Activated CD4-positive, alpha-beta T cell treated with anti-CD3 and anti-CD28 coated beads for 36 hours (primary cell): ENCODE measurements at regions of chr4 and their contacts with region 1.

Region 1: GRCh38 chr4:40924096-40924792 is 174.5 kb downstream of the NSUN7 start:
- DNase-seq: peak; percentile 91
- ATAC-seq: peak; percentile 87
- H3K4me3 Mint-ChIP-seq: no peak overlapping the region
- H3K27ac Mint-ChIP-seq: peak overlapping the region; percentile 90
- H3K4me1 Mint-ChIP-seq: peaks cover 10% of the 10 kb centered on the region
- H3K27me3 Mint-ChIP-seq: peaks cover 21% of the 10 kb centered on the region

Region 2: GRCh38 chr4:39950861-39951481 is 973.3 kb before region 1 on chr4:
- CTCF ChIA-PET with region 1: no interaction called
- POLR2A ChIA-PET with region 1: no interaction called
- intact Hi-C with region 1: no loop called
- DNase-seq: no peak
- ATAC-seq: no peak
- H3K4me3 Mint-ChIP-seq: no peak overlapping the region
- H3K27ac Mint-ChIP-seq: no peak overlapping the region
- H3K4me1 Mint-ChIP-seq: peaks cover 57% of the 10 kb centered on the region
- H3K27me3 Mint-ChIP-seq: no peaks in the 10 kb centered on the region

Region 3: GRCh38 chr4:40228497-40229365 is 695.5 kb before region 1 on chr4:
- CTCF ChIA-PET with region 1: no interaction called
- POLR2A ChIA-PET with region 1: no interaction called
- intact Hi-C with region 1: no loop called
- DNase-seq: peak; percentile 64
- ATAC-seq: peak; percentile 34
- H3K4me3 Mint-ChIP-seq: peak overlapping the region; percentile 61
- H3K27ac Mint-ChIP-seq: peak overlapping the region; percentile 96
- H3K4me1 Mint-ChIP-seq: peaks cover 93% of the 10 kb centered on the region
- H3K27me3 Mint-ChIP-seq: no peaks in the 10 kb centered on the region

Region 4: DNA sequence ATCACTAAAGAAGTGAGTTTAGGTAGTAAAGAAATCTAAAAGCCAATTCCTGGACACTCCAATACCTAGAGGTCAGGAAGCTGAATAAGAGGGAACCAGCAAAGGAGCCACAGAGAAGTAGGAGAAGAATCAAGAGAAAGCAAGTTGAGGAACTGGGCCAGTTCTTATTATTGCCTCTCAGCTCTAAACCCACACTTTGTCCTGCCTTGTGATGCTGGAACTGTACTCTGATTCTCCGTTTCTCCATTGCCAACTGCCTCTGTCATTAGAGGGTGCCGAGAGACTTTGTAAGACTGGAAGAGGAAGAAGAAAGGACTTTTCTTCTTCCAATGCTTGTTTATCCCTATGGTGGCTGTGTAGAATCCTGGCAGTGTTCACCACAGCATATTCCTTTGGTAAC is 135.9 kb before region 1 on chr4:
- CTCF ChIA-PET with region 1: no interaction called
- POLR2A ChIA-PET with region 1: no interaction called
- intact Hi-C with region 1: no loop called
- DNase-seq: no peak
- ATAC-seq: no peak
- H3K4me3 Mint-ChIP-seq: no peak overlapping the region
- H3K27ac Mint-ChIP-seq: no peak overlapping the region
- H3K4me1 Mint-ChIP-seq: no peaks in the 10 kb centered on the region
- H3K27me3 Mint-ChIP-seq: peaks cover 2% of the 10 kb centered on the region

Region 5: GRCh38 chr4:40840985-40841571 is 83.2 kb before region 1 on chr4:
- CTCF ChIA-PET with region 1: interaction called, 23 read pairs
- POLR2A ChIA-PET with region 1: no interaction called
- intact Hi-C with region 1: loop called (anchors 2 kb)
- DNase-seq: peak; percentile 93
- ATAC-seq: peak; percentile 97
- H3K4me3 Mint-ChIP-seq: no peak overlapping the region
- H3K27ac Mint-ChIP-seq: no peak overlapping the region
- H3K4me1 Mint-ChIP-seq: peaks cover 5% of the 10 kb centered on the region
- H3K27me3 Mint-ChIP-seq: peaks cover 6% of the 10 kb centered on the region

Region 6: DNA sequence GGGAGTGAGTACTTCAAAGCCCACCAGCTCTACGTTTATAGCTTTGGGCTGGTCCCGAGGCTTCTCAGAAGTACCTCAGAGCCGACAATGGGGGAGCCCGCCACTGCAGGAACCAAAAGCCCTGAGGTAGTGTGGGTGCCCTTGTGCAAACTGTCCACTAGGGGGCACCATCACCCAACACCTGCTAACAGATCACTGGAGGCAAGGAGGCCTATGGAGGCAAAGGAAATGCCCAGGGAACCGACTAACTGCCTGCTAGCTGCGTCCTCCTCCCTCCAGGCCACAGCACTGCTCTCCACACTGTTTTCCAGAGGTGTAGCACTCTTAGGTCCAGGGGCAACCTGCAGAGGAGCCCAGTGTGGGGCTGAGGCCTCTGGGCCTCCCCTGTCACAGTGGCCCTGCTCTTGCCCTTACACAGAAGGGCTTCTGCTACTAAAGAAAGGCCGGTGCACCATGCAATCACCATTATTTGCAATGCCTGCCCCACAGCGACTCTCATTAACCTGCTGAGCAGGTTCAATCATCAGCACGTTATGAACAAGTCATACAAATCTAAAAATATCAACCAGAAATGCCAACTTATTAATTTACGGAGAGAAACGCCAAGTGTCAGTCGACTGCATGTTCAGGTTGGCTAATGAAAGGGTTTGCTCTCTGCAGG is 15.4 kb before region 1 on chr4:
- CTCF ChIA-PET with region 1: interaction called, 35 read pairs
- POLR2A ChIA-PET with region 1: no interaction called
- intact Hi-C with region 1: loop called (anchors 1 kb)
- DNase-seq: peak; percentile 90
- ATAC-seq: peak; percentile 85
- H3K4me3 Mint-ChIP-seq: peak overlapping the region; percentile 26
- H3K27ac Mint-ChIP-seq: peak overlapping the region; percentile 95
- H3K4me1 Mint-ChIP-seq: peaks cover 36% of the 10 kb centered on the region
- H3K27me3 Mint-ChIP-seq: no peaks in the 10 kb centered on the region

Region 7: DNA sequence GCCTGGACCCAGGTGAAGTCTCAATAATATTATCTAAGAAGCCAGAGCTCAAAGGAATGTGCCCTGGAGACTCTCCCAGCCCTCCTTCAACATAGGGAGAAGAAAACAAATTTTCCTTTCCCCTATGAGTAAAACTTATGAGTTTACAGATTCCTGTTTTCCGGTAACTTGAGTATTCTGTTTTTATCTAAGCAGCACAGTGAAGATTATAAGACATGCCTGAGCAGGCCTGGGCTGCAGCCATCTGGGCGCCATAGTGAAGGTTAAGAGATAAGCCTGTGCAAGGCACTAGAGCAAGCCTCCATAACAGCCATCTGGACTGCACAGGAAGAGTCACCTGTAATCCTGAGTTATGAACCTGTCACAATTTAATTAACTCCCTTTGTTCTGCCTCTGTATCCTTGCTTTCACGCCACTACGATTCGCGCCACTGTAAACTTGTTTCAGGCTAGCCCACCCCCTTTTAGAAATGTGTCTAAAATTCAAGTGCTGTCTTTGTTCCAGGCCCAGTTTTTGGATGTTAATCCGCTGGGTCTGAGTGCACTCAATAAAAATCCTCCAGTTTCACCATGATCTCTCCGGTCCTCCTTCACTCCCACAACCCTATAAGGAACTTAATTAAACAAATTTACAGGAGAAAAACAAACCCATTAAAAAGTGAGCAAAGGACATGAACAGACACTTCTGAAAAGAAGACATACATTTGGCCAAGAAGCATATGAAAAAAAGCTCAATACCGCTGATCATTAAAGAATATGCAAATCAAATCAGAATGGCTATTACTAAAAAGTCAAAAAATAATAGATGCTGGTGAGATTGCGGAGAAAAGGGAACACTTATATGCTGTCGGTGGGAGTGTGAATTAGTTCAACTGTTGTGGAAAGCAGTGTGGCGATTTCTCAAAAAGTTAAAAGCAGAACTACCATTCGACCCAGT is 100.6 kb after region 1 on chr4:
- CTCF ChIA-PET with region 1: no interaction called
- POLR2A ChIA-PET with region 1: no interaction called
- intact Hi-C with region 1: no loop called
- DNase-seq: no peak
- ATAC-seq: no peak
- H3K4me3 Mint-ChIP-seq: no peak overlapping the region
- H3K27ac Mint-ChIP-seq: no peak overlapping the region
- H3K4me1 Mint-ChIP-seq: no peaks in the 10 kb centered on the region
- H3K27me3 Mint-ChIP-seq: no peaks in the 10 kb centered on the region

Region 8: DNA sequence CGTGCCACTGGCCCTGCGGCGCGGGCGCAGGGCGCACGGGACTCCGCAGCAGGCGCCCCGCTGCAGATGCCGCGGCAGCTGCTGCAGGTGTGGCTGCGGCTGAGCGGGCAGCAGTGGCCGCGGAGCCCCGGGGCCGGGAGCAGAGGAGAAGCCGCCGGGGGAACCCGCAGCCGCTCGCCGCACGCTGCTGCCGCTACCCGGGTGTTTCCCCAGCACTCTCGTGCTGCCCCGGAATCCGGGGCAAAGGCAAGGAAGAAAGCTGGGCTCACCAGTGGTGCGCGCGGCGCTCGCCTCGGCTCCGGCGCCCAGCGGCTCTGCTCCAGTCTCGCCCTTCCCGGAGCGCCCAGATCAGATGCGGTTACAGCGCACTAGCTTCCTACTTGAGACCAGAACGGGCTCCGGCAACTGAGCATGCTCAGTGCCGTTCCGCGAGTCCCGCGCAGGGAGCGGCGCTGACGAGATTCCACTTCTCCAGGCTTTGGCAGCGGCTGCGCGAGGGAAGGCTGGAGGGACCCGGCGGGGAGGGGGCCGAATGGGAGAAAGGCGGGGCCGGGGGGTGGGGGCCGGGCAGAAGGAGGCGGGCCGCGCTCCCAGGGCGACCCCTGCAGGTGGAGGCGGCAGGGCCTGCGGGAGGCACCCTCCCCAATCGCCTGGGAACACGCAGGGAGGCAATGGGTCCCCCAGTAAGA is 290.0 kb after region 1 on chr4 and contains the start of gene APBB2:
- CTCF ChIA-PET with region 1: interaction called, 14 read pairs
- POLR2A ChIA-PET with region 1: no interaction called
- intact Hi-C with region 1: loop called (anchors 1 kb)
- DNase-seq: peak; percentile 79
- ATAC-seq: peak; percentile 67
- H3K4me3 Mint-ChIP-seq: peak within 1 kb of the TSS; percentile 72
- H3K27ac Mint-ChIP-seq: no peak within 1 kb of the TSS
- H3K4me1 Mint-ChIP-seq: peaks cover 27% of the 10 kb centered on the region
- H3K27me3 Mint-ChIP-seq: peaks cover 58% of the 10 kb centered on the region
- total RNA-seq, gene APBB2: 1.3 to 1.5 TPM